Endothelial cell of umbilical vein (primary cell): ENCODE measurements at regions of chr6 and their contacts with region 1.

Region 1: DNA sequence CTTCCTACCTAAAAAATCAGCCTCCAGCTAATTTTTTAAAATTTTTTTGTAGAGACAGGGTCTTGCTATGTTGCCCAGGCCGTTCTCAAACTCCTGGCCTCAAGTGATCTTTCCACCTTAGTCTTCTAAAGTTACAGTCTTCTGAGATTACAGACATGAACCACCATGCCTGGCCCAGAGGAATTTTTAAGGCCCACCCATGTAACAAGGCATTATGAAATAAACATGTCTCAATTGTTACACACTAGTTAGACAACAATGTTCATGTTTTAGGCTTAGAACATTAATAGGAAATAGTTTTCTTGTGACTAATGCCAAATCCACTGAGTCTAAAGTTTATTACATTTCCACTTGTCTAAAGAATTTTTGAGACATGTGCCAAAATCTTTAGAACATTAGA is 221.2 kb downstream of the LAMA2 start:
- DNase-seq: no peak
- H3K4me3 ChIP-seq: no peak overlapping the region
- H3K27ac ChIP-seq: peak overlapping the region; percentile 47
- H3K4me1 ChIP-seq: peaks cover 7% of the 10 kb centered on the region
- H3K27me3 ChIP-seq: no peaks in the 10 kb centered on the region
- CTCF ChIP-seq: no peak
- POLR2A ChIP-seq: no peak

Region 2: DNA sequence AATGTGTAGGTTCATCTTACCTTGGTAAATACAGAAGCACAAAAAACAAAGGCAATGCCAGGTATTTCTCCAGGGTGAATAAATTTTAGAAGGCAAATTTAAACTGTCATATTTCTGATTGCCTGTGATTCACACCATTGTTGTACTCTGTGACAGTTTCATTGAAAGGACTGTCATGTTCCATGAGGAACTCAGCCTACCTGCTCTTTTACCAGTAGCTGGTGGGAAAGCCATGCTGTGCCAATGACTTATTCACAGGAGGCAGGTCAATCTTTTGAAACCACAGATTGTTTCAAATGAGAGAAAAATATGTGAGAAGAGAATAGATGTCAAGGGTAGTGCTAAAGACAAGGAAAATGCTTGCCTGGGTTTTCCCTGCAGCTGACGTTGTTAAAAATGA is 14.8 kb before region 1 on chr6:
- CTCF ChIA-PET with region 1: no interaction called
- POLR2A ChIA-PET with region 1: no interaction called
- dilution Hi-C with region 1: no loop called
- intact Hi-C with region 1: no loop called
- DNase-seq: no peak
- H3K4me3 ChIP-seq: no peak overlapping the region
- H3K27ac ChIP-seq: no peak overlapping the region
- H3K4me1 ChIP-seq: no peaks in the 10 kb centered on the region
- H3K27me3 ChIP-seq: peaks cover 0 to 4% of the 10 kb centered on the region in 2 experiments
- CTCF ChIP-seq: no peak
- POLR2A ChIP-seq: no peak

Region 3: GRCh38 chr6:129133770-129134192 is 29.6 kb after region 1 on chr6:
- CTCF ChIA-PET with region 1: interaction called, 3 read pairs
- POLR2A ChIA-PET with region 1: no interaction called
- dilution Hi-C with region 1: no loop called
- intact Hi-C with region 1: loop called (anchors 1 kb)
- DNase-seq: peak; percentile 89
- H3K4me3 ChIP-seq: no peak overlapping the region
- H3K27ac ChIP-seq: no peak overlapping the region
- H3K4me1 ChIP-seq: peaks cover 11% of the 10 kb centered on the region
- H3K27me3 ChIP-seq: peaks cover 0 to under 1% of the 10 kb centered on the region in 2 experiments
- CTCF ChIP-seq: no peak
- POLR2A ChIP-seq: no peak